CD4-positive, alpha-beta memory T cell (primary cell): ENCODE measurements at regions of chr2 and their contacts with region 1.

Region 1: GRCh38 chr2:27683390-27684071 is 19.8 kb downstream of the SLC4A1AP start:
- DNase-seq: peak; percentile 84 to 87 (median 86)
- H3K4me3 ChIP-seq: no peak overlapping the region
- H3K4me3 Mint-ChIP-seq: peak overlapping the region in 1 of 8 donors; percentile 36
- H3K27ac ChIP-seq: no peak overlapping the region
- H3K27ac Mint-ChIP-seq: peak overlapping the region; percentile 62 to 93 (median 88)
- H3K4me1 ChIP-seq: peaks cover 26% of the 10 kb centered on the region
- H3K4me1 Mint-ChIP-seq: peaks cover 12 to 21% (median 16%) of the 10 kb centered on the region in 4 donors
- H3K27me3 ChIP-seq: no peaks in the 10 kb centered on the region
- H3K27me3 Mint-ChIP-seq: no peaks in the 10 kb centered on the region

Region 2: DNA sequence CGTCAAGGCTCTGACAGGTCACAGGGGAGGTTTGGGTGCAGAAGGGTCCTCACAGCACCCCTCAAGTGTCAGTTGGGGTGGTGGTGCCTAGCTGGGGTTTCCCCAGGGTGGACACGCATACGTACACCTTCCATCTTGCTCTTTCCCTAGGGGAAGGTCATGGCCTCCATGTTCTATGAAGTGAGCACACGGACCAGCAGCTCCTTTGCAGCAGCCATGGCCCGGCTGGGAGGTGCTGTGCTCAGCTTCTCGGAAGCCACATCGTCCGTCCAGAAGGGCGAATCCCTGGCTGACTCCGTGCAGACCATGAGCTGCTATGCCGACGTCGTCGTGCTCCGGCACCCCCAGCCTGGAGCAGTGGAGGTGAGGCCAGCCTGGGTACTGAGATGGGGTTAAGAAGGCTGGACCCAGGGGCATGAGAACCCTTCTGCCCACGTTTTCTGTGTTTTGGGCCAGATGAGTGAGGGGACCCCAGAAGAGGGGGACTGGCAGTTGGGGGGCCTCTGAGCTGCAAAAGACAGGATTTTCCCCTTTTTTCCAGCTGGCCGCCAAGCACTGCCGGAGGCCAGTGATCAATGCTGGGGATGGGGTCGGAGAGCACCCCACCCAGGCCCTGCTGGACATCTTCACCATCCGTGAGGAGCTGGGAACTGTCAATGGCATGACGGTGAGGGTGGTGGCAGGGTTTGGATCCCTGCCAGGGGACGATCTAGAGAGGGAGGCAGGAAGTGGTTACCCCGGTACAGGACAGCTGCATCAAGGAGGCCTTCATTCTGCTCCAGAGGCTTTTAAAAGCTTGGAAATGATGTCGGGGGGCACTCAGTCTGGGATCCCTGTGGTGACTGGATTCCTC is 441.5 kb before region 1 on chr2:
- CTCF ChIA-PET with region 1: no interaction called
- POLR2A ChIA-PET with region 1: no interaction called
- intact Hi-C with region 1: no loop called
- DNase-seq: no peak
- H3K4me3 ChIP-seq: no peak overlapping the region
- H3K4me3 Mint-ChIP-seq: peak overlapping the region in 1 of 8 donors; percentile 16
- H3K27ac ChIP-seq: no peak overlapping the region
- H3K27ac Mint-ChIP-seq: peak overlapping the region in 4 of 7 donors; percentile 8 to 81 (median 43)
- H3K4me1 ChIP-seq: peaks cover 9% of the 10 kb centered on the region
- H3K4me1 Mint-ChIP-seq: peaks cover 0 to 19% (median 7%) of the 10 kb centered on the region in 4 donors
- H3K27me3 ChIP-seq: no peaks in the 10 kb centered on the region
- H3K27me3 Mint-ChIP-seq: no peaks in the 10 kb centered on the region

Region 3: DNA sequence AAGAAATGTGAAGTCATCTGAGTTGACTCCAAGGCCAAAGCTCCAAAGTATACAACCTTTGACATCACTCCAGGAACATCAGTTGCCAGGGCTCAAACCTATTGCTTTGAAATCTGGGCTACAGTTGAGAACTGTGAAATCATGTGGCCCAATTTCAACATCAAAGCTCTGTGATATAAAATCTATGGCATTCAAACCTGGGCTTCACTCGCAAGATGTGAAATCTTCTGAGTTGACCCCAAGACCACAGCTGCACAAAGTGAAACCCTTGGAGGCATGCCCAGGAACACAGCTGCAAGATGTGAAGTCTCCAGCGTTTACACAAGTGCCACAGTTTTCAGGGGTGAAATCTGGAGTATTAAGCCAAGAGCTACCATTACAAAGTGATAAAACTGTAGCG is 110.1 kb before region 1 on chr2:
- CTCF ChIA-PET with region 1: no interaction called
- POLR2A ChIA-PET with region 1: no interaction called
- intact Hi-C with region 1: no loop called
- DNase-seq: no peak
- H3K4me3 ChIP-seq: no peak overlapping the region
- H3K4me3 Mint-ChIP-seq: no peak overlapping the region
- H3K27ac ChIP-seq: no peak overlapping the region
- H3K27ac Mint-ChIP-seq: no peak overlapping the region
- H3K4me1 ChIP-seq: no peaks in the 10 kb centered on the region
- H3K4me1 Mint-ChIP-seq: no peaks in the 10 kb centered on the region
- H3K27me3 ChIP-seq: no peaks in the 10 kb centered on the region
- H3K27me3 Mint-ChIP-seq: peaks cover 5 to 8% of the 10 kb centered on the region in 2 donors

Region 4: GRCh38 chr2:27663463-27664249 is 19.9 kb before region 1 on chr2 and contains the starts of genes SLC4A1AP and SUPT7L:
- CTCF ChIA-PET with region 1: interaction called, 39 read pairs
- POLR2A ChIA-PET with region 1: interaction called, 3 read pairs
- intact Hi-C with region 1: no loop called
- DNase-seq: peak; percentile 82 to 85 (median 85)
- H3K4me3 ChIP-seq: peak within 1 kb of the TSS; percentile 99
- H3K4me3 Mint-ChIP-seq: peak within 1 kb of the TSS; percentile 96 to 100 (median 100)
- H3K27ac ChIP-seq: peak within 1 kb of the TSS; percentile 99
- H3K27ac Mint-ChIP-seq: peak within 1 kb of the TSS; percentile 98 to 100 (median 99)
- H3K4me1 ChIP-seq: peaks cover 31% of the 10 kb centered on the region
- H3K4me1 Mint-ChIP-seq: peaks cover 31 to 63% (median 49%) of the 10 kb centered on the region in 4 donors
- H3K27me3 ChIP-seq: no peaks in the 10 kb centered on the region
- H3K27me3 Mint-ChIP-seq: no peaks in the 10 kb centered on the region
- total RNA-seq, gene SLC4A1AP: 24.4 to 26.6 TPM
- total RNA-seq, gene SUPT7L: 45.4 to 48.5 TPM

Region 5: GRCh38 chr2:27672723-27673486 is 10.6 kb before region 1 on chr2:
- CTCF ChIA-PET with region 1: interaction called, 39 read pairs
- POLR2A ChIA-PET with region 1: no interaction called
- intact Hi-C with region 1: no loop called
- DNase-seq: no peak
- H3K4me3 ChIP-seq: no peak overlapping the region
- H3K4me3 Mint-ChIP-seq: no peak overlapping the region
- H3K27ac ChIP-seq: no peak overlapping the region
- H3K27ac Mint-ChIP-seq: peak overlapping the region in 3 of 7 donors; percentile 37 to 73 (median 69)
- H3K4me1 ChIP-seq: no peaks in the 10 kb centered on the region
- H3K4me1 Mint-ChIP-seq: peaks cover 4 to 10% (median 7%) of the 10 kb centered on the region in 4 donors
- H3K27me3 ChIP-seq: no peaks in the 10 kb centered on the region
- H3K27me3 Mint-ChIP-seq: no peaks in the 10 kb centered on the region

Region 6: DNA sequence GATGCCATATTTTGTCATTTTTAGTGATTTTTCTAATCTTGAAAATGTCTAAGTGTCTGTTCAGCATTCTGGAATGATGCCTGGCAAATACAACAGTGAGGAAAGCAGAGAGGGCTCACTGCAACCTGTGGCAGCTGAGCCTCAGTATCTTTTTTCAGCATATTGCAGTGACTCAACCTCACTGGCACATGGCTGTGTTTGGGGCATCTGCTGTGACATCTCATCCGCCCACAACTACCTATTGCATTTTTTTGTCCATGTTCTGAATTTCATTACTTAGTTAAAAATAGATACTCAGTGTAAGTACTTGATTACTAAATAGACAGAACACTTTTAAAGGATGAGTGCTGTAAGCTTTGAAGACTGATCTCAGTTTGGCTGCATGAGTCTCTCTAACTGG is 217.7 kb after region 1 on chr2:
- CTCF ChIA-PET with region 1: no interaction called
- POLR2A ChIA-PET with region 1: no interaction called
- intact Hi-C with region 1: no loop called
- DNase-seq: no peak
- H3K4me3 ChIP-seq: no peak overlapping the region
- H3K4me3 Mint-ChIP-seq: no peak overlapping the region
- H3K27ac ChIP-seq: no peak overlapping the region
- H3K27ac Mint-ChIP-seq: peak overlapping the region in 2 of 7 donors; percentile 30 to 50
- H3K4me1 ChIP-seq: peaks cover 20% of the 10 kb centered on the region
- H3K4me1 Mint-ChIP-seq: peaks cover 26 to 50% (median 33%) of the 10 kb centered on the region in 4 donors
- H3K27me3 ChIP-seq: no peaks in the 10 kb centered on the region
- H3K27me3 Mint-ChIP-seq: no peaks in the 10 kb centered on the region